Activated CD4-positive, alpha-beta T cell treated with anti-CD3 and anti-CD28 coated beads, Interleukin-2, amount 10 ng/mL, durations not matched to agents 7 days and 5 days (primary cell): ENCODE measurements at regions of chr12 and their contacts with region 1.

Region 1: GRCh38 chr12:98516184-98516873 is 939 bp downstream of the TMPO start:
- DNase-seq: peak; percentile 93
- H3K4me3 Mint-ChIP-seq: peak overlapping the region; percentile 97
- H3K27ac Mint-ChIP-seq: peak overlapping the region; percentile 99
- H3K4me1 Mint-ChIP-seq: peaks cover 36% of the 10 kb centered on the region
- H3K27me3 Mint-ChIP-seq: no peaks in the 10 kb centered on the region

Region 2: DNA sequence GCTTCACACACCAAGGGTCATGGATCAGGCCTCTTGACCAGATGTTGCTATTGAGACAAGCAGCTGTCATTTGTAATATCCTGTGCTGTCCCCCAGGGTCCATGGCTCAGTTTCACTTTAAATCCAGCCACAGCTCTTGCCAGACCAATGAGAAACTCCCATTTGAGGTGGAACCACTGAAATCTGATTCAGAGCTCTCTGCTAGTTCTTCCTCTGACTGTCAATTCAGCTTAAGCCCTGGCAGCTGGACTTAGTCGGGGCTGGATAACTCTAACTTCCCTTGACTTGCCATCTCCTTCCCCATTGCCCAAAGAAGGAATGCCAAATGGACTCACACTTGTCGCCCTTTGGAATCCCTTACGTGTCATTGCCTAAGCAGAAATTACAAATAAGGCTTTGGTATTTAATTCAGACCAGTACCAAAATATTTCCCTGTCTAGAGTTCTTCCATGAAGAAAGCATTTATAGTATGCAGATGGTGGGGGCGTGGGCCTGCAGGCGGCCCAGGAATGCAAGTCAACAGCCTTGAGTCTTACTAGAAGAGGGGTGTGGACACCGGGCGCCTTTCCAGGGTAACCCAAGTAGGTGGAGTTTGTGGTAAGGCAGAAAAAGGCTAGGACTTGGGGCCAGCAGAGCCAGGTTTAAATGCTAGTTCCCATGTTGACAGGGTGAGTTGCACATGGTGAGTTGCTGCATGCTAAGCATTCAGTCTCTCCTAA is 97.8 kb before region 1 on chr12:
- CTCF ChIA-PET with region 1: no interaction called
- POLR2A ChIA-PET with region 1: no interaction called
- DNase-seq: no peak
- H3K4me3 Mint-ChIP-seq: no peak overlapping the region
- H3K27ac Mint-ChIP-seq: no peak overlapping the region
- H3K4me1 Mint-ChIP-seq: no peaks in the 10 kb centered on the region
- H3K27me3 Mint-ChIP-seq: peaks cover 4% of the 10 kb centered on the region

Region 3: DNA sequence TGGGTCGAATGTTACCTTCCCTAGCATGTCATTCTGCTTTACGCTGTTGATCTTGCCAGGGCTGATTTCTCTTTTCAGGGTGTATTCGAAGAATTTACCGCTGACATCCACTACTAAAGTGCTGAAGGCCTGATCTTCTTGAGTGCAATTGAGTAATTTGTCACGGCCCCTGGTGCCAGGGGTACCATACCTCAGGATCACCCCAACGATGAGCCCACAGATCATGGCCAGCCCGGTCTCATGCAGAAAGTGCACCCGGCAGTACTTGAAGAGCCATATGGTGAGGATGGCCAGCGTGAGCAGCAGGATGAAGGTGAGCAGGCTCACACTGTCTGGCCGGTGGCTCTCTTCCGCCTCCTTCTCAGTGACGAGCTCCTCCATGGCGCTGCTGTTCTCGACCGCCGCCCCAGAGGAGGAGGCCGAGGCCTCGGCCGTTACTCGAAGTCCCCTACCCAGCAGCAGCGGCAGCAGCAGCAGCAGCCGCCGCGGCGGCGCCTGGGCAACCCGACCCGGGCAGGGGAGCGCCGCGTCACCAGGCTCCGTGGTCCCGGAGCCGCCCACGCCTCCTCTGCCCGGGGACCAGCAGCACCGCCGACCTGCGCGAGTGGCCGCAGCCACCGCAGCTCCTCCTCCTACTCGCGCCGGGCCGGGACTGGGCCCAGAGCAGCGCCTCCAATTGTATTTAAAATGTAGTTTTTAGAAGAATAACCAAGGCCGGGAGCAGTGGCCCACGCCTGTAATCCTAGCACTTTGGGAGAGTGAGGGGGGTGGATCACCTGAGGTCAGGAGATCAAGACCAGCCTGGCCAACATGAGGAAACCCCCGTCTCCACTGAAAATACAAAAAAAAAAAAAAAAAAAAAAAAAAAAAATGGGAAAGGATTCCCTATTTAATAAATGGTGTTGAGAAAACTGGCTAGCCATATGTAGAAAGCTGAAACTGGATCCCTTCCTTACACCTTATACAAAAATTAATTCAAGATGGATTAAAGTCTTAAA is 59.5 kb before region 1 on chr12:
- CTCF ChIA-PET with region 1: no interaction called
- POLR2A ChIA-PET with region 1: no interaction called
- DNase-seq: no peak
- H3K4me3 Mint-ChIP-seq: no peak overlapping the region
- H3K27ac Mint-ChIP-seq: no peak overlapping the region
- H3K4me1 Mint-ChIP-seq: peaks cover 3% of the 10 kb centered on the region
- H3K27me3 Mint-ChIP-seq: peaks cover 30% of the 10 kb centered on the region

Region 4: DNA sequence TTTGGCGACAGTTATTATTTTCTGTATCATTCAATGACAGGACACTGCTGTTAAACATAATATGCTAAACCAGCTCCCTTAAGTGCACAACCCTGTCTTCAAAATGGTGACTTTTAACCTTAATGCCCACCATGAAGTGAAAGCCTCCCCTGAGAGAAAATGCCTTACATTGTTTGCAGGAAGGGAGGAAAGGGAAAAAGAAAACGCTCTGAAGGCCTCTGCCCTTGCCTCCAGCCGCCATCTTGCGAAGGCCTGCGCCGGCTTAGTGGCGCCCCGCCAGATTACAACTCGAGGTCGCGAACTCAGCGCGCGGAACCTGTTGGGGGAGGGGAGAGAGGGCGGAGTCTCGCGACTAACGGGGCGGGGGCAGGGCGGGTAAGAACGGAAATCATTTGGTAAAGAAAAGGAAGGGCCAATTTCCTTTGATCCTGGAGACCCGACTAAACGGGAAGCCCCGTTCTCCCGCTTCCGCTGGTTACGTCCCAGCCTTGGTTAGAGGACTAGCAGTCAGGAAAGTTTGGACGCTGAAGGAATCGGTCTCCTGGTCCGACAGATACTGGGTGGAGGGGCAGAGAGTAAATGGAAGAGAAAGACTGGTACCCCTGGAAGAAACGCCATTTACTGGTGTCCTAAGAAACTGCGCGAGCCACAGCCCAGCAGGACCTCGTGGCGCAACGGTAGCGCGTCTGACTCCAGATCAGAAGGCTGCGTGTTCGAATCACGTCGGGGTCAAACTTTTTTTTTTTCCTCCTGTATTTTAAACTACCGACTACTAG is 12.5 kb before region 1 on chr12:
- CTCF ChIA-PET with region 1: interaction called, 7 read pairs
- POLR2A ChIA-PET with region 1: interaction called, 19 read pairs
- DNase-seq: peak; percentile 95
- H3K4me3 Mint-ChIP-seq: peak overlapping the region; percentile 94
- H3K27ac Mint-ChIP-seq: peak overlapping the region; percentile 99
- H3K4me1 Mint-ChIP-seq: peaks cover 31% of the 10 kb centered on the region
- H3K27me3 Mint-ChIP-seq: peaks cover 7% of the 10 kb centered on the region

Region 5: DNA sequence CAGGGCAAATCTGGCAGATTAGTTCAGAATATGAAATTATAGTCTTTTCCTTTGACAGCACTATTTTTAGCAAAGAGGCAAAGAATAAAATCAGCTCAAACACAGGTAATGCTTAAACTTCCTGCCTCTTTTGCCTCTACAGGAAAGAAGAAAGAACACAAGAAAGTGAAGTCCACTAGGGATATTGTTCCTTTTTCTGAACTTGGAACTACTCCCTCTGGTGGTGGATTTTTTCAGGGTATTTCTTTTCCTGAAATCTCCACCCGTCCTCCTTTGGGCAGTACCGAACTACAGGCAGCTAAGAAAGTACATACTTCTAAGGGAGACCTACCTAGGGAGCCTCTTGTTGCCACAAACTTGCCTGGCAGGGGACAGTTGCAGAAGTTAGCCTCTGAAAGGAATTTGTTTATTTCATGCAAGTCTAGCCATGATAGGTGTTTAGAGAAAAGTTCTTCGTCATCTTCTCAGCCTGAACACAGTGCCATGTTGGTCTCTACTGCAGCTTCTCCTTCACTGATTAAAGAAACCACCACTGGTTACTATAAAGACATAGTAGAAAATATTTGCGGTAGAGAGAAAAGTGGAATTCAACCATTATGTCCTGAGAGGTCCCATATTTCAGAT is 16.5 kb after region 1 on chr12:
- CTCF ChIA-PET with region 1: interaction called, 6 read pairs
- POLR2A ChIA-PET with region 1: interaction called, 10 read pairs
- DNase-seq: peak; percentile 40
- H3K4me3 Mint-ChIP-seq: no peak overlapping the region
- H3K27ac Mint-ChIP-seq: peak overlapping the region; percentile 28
- H3K4me1 Mint-ChIP-seq: peaks cover 25% of the 10 kb centered on the region
- H3K27me3 Mint-ChIP-seq: no peaks in the 10 kb centered on the region

Region 6: GRCh38 chr12:98543701-98544100 is 27.4 kb after region 1 on chr12:
- CTCF ChIA-PET with region 1: no interaction called
- POLR2A ChIA-PET with region 1: no interaction called
- DNase-seq: no peak
- H3K4me3 Mint-ChIP-seq: no peak overlapping the region
- H3K27ac Mint-ChIP-seq: no peak overlapping the region
- H3K4me1 Mint-ChIP-seq: peaks cover 17% of the 10 kb centered on the region
- H3K27me3 Mint-ChIP-seq: no peaks in the 10 kb centered on the region